ENCODE measurements at regions of chr2 and their contacts with region 1.

Region 1: GRCh38 chr2:211175956-211176355 is 619.6 kb downstream of the CPS1 start:
- DNase-seq: no peak

Region 2: GRCh38 chr2:209253544-209253943 is 1922.4 kb before region 1 on chr2:
- intact Hi-C with region 1: no loop called
- DNase-seq: no peak

Region 3: DNA sequence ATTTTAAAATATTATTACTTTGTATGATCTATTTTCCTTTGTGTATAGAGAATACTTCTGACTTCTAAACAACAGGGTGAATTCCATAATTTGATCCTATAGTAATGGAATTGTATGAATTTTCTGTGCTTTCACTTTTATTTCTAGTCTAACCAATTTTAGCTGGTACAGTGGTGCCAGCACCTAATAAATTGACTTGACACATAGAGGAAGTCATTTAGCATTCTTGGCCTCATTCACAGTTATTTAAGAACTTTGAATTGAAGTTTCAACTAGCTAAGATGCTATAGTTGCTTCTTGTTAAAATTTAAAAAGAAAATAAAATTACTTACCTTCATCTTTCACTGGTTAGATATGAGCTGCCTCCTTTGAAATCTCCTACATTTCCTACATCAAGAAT is 399.2 kb before region 1 on chr2:
- intact Hi-C with region 1: loop called in 1 of 2 experiments (anchors 5 kb)
- DNase-seq: no peak

Region 4: DNA sequence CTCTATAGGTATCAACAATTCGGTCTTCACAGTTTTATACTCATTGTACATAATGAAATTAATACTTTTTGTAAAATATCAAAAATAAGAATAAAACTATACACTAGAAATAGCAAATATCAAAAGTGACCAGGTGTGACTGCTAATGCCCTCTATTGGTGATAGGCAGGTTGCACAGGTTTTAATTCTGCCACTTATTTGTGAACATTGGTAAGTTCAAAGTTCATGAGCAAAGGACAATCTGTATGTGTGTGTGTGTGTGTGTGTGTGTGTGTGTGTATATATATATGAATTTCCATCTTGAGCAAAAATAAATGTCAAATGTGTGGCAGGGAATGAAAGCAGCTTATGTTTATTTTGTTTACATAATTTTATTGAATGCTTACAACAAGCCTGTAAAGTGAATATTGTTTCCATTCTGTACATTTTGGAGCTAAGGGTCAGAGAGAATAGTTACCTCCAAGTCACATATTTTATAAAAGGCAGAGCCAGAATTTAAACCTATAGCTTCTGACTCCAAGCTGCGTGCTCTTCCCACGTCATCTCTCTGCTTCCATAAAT is 82.1 kb before region 1 on chr2:
- intact Hi-C with region 1: no loop called
- DNase-seq: no peak

Measured in posterior vena cava (tissue), 2 donors.